ENCODE measurements at regions of chr3 and their contacts with region 1.

Region 1: DNA sequence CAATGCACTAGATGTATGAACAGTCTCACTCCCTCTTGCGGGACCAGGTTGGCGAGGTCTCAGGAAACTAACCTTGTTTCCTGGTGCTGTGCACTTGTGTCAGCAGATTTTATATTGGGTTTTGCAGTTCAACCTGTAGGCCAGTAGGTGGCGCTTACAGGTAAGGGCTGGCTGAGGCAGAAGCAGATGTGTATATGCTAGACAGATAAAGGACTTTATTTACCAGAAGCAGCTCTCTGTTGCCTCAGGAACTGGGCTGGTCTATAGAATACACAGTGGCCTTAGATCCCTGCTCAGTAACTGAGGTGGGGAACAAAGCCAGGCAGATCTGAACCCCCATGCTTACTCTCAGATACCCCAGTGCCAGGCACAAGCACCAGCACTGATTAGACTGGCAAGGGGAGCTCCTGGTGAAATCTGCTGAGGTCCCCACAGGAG is 296.8 kb downstream of the DOCK3 start:
- DNase-seq: peak; percentile 20 to 85 (median 47)
- ATAC-seq: peak; percentile 96
- H3K4me3 ChIP-seq: no peak overlapping the region
- H3K4me3 Mint-ChIP-seq: no peak overlapping the region
- H3K27ac ChIP-seq: no peak overlapping the region
- H3K27ac Mint-ChIP-seq: no peak overlapping the region
- H3K4me1 ChIP-seq: peaks cover 12% of the 10 kb centered on the region
- H3K4me1 Mint-ChIP-seq: peaks cover 17% of the 10 kb centered on the region
- H3K27me3 ChIP-seq: no peaks in the 10 kb centered on the region
- H3K27me3 Mint-ChIP-seq: no peaks in the 10 kb centered on the region
- CTCF ChIP-seq: peak; percentile 95

Region 2: DNA sequence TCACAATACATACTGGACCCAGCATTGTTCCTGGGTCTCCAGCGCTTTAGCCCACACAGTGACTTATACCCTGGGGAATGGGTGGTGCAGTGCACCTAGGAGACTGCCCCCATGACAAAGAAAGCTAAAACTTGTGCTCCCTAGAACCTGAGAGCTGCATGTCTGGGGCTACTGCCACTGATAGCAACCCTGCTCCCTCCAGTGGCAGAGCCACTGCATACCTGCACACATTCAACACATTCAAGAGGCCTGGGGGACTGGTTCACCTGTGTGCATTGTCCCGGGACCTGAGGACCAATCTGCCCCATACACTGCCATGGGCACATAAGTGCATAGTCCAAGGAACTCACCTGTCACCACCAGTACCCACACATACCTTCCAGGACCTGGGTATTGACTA is 110.9 kb after region 1 on chr3:
- CTCF ChIA-PET with region 1: no interaction called
- POLR2A ChIA-PET with region 1: no interaction called
- intact Hi-C with region 1: loop called in 1 of 2 experiments (anchors 10 kb)
- DNase-seq: peak in 2 of 14 experiments; percentile 4 to 9
- ATAC-seq: no peak
- H3K4me3 ChIP-seq: no peak overlapping the region
- H3K4me3 Mint-ChIP-seq: no peak overlapping the region
- H3K27ac ChIP-seq: no peak overlapping the region
- H3K27ac Mint-ChIP-seq: no peak overlapping the region
- H3K4me1 ChIP-seq: peaks cover 2% of the 10 kb centered on the region
- H3K4me1 Mint-ChIP-seq: no peaks in the 10 kb centered on the region
- H3K27me3 ChIP-seq: no peaks in the 10 kb centered on the region
- H3K27me3 Mint-ChIP-seq: no peaks in the 10 kb centered on the region
- CTCF ChIP-seq: no peak

Region 3: GRCh38 chr3:51275111-51275805 is 303.8 kb after region 1 on chr3:
- CTCF ChIA-PET with region 1: no interaction called
- POLR2A ChIA-PET with region 1: interaction called, 3 read pairs
- intact Hi-C with region 1: loop called (anchors 2 to 10 kb)
- DNase-seq: no peak
- ATAC-seq: no peak
- H3K4me3 ChIP-seq: no peak overlapping the region
- H3K4me3 Mint-ChIP-seq: no peak overlapping the region
- H3K27ac ChIP-seq: no peak overlapping the region
- H3K27ac Mint-ChIP-seq: peak overlapping the region; percentile 78
- H3K4me1 ChIP-seq: peaks cover 18% of the 10 kb centered on the region
- H3K4me1 Mint-ChIP-seq: peaks cover 45% of the 10 kb centered on the region
- H3K27me3 ChIP-seq: no peaks in the 10 kb centered on the region
- H3K27me3 Mint-ChIP-seq: no peaks in the 10 kb centered on the region
- CTCF ChIP-seq: no peak

Region 4: GRCh38 chr3:51371943-51372557 is 400.5 kb after region 1 on chr3:
- CTCF ChIA-PET with region 1: interaction called, 11 read pairs
- POLR2A ChIA-PET with region 1: no interaction called
- intact Hi-C with region 1: loop called (anchors 1 kb)
- DNase-seq: peak in 11 of 14 experiments; percentile 27 to 76 (median 42)
- ATAC-seq: peak; percentile 49
- H3K4me3 ChIP-seq: no peak overlapping the region
- H3K4me3 Mint-ChIP-seq: no peak overlapping the region
- H3K27ac ChIP-seq: no peak overlapping the region
- H3K27ac Mint-ChIP-seq: no peak overlapping the region
- H3K4me1 ChIP-seq: no peaks in the 10 kb centered on the region
- H3K4me1 Mint-ChIP-seq: no peaks in the 10 kb centered on the region
- H3K27me3 ChIP-seq: peaks cover 0 to 3% of the 10 kb centered on the region in 2 experiments
- H3K27me3 Mint-ChIP-seq: no peaks in the 10 kb centered on the region
- CTCF ChIP-seq: peak; percentile 65

Region 5: GRCh38 chr3:51434746-51435327 is 463.3 kb after region 1 on chr3:
- CTCF ChIA-PET with region 1: no interaction called
- POLR2A ChIA-PET with region 1: no interaction called
- intact Hi-C with region 1: loop called in 1 of 2 experiments (anchors 2 kb)
- DNase-seq: peak in 13 of 14 experiments; percentile 13 to 77 (median 30)
- ATAC-seq: peak; percentile 94
- H3K4me3 ChIP-seq: no peak overlapping the region
- H3K4me3 Mint-ChIP-seq: no peak overlapping the region
- H3K27ac ChIP-seq: no peak overlapping the region
- H3K27ac Mint-ChIP-seq: no peak overlapping the region
- H3K4me1 ChIP-seq: no peaks in the 10 kb centered on the region
- H3K4me1 Mint-ChIP-seq: peaks cover 8% of the 10 kb centered on the region
- H3K27me3 ChIP-seq: no peaks in the 10 kb centered on the region
- H3K27me3 Mint-ChIP-seq: no peaks in the 10 kb centered on the region
- CTCF ChIP-seq: peak; percentile 83